Right ventricle myocardium inferior (tissue), 1 donor: ENCODE measurements at regions of chr4 and their contacts with region 1.

Region 1: GRCh38 chr4:74932816-74933561 is at the start of gene PARM1:
- DNase-seq: peak; percentile 94
- ATAC-seq: peak; percentile 97
- total RNA-seq, gene PARM1: 58.7 TPM

Region 2: DNA sequence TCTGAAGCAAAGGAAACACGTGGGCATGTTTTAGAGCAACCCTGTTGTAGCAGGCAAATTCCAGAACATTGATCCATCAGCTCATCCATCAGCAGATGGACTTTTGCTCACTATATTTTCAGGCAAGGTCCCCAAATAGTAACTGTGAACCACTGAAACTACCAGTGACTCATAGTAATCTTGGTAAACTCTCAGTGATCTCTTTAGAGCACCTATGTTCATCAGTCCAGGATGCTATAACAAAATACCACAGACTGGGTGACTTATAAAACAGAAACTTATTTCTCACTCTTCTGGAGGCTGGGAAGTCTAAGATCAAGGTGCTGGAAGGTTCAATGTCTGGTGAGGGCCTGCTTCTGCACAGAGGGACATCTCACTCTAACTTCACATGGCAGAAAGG is 109.8 kb before region 1 on chr4:
- intact Hi-C with region 1: no loop called
- DNase-seq: no peak
- ATAC-seq: no peak

Region 3: DNA sequence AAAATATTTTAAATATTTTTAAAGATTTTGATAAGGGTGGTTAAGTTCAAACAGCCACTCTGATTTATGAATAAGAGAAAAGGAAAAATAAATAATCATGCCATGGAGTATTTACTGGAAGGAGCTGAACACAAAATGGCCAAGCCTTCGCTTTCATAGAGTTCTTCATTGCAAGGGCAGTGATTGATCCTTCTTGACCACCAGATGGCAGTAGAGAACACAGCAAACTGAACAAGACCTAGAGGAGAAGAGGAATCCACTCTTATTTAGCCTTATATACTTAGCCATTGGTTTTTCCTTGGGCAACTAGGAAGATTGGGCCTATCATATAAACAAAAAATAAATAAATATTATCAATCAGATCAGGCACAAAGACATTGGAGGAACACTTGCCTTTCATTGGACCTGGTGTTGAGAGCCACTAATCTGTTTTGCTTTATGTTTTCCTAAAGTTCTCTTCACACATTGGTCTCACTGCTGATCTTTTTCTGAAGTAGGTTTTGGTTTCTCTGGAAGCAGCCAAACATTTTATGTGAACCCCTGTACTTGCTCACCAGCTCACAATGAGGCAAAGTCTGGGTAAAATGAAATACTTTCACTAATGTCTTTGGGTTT is 58.1 kb before region 1 on chr4:
- intact Hi-C with region 1: loop called (anchors 5 kb)
- DNase-seq: no peak
- ATAC-seq: peak; percentile 75

Region 4: GRCh38 chr4:74969507-74970474 is 36.8 kb after region 1 on chr4:
- intact Hi-C with region 1: loop called (anchors 1 kb)
- DNase-seq: no peak
- ATAC-seq: peak; percentile 88

Region 5: GRCh38 chr4:75056277-75056676 is 123.3 kb after region 1 on chr4:
- intact Hi-C with region 1: loop called (anchors 2 kb)
- DNase-seq: no peak
- ATAC-seq: peak; percentile 45

Region 6: DNA sequence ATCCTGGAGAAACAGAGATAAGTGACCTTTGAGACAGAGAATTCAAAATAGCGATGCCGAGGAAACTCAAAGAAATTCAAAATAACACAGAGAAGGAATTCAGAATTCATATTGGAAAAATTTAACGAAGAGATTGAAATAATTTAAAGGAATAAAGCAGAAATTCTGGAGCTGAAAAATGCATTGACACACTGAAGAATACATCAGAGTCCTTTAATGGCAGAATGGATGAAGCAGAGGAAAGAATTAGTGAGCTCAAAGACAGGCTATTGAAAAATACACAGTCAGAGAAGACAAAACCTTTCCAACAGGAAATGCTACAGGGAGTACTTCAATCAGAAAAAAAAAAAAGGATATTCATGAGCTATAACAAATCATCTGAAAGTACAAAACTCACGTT is 185.8 kb after region 1 on chr4:
- intact Hi-C with region 1: loop called (anchors 1 kb)
- DNase-seq: no peak
- ATAC-seq: no peak

Region 7: DNA sequence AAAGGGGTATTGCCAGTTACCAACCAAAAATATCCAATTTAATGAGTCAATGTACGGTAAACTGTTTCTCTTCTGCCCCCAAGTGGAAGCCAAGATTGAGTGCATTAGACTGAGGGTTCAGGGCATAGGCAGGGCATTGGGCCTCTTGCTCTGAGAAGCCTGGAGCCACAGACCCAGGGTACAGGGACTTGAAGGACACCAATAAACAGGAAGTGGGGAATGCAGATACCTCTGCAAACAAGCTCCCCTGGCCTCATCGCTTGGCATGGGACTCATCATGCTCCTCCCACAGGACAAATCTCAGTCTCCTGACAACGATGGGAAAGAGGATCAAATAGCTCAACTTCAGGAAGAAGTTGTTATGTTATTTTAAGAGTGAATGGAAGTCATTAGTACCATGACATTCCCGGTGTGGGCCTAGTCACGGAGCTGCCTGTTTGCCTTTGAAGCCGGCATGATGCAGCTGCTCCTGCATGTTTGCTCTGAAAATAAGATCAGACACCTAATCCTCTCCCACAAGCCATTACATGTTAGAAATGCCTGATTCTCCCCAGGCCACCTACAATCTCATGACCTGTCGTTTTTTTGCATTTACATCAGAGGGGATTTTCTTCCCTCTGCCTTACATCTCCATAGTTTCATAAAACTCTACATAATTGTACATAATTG is 357.1 kb after region 1 on chr4:
- intact Hi-C with region 1: loop called (anchors 5 kb)
- DNase-seq: peak; percentile 43
- ATAC-seq: no peak

Region 8: DNA sequence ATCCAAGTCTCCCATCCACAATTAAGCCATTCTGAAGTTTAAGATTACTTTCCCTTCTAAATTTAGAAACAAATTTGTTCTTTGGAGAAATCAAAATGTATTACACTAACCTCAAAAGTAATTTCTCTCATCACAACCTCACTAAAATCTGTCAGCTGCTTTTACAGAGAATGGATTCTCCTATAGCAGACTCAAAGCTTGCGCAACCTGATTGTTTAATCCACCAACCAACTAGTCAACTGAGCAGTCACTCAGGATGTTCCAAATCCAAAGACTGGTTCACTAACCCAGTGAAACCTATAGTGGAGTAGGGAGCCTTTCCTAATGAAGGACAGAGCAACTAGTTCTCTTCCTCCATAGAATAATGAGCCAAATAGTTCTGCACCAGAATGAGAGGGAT is 536.9 kb after region 1 on chr4:
- intact Hi-C with region 1: loop called (anchors 5 kb)
- DNase-seq: no peak
- ATAC-seq: no peak